A673 (cell line): ENCODE measurements at regions of chr10 and their contacts with region 1.

Region 1: DNA sequence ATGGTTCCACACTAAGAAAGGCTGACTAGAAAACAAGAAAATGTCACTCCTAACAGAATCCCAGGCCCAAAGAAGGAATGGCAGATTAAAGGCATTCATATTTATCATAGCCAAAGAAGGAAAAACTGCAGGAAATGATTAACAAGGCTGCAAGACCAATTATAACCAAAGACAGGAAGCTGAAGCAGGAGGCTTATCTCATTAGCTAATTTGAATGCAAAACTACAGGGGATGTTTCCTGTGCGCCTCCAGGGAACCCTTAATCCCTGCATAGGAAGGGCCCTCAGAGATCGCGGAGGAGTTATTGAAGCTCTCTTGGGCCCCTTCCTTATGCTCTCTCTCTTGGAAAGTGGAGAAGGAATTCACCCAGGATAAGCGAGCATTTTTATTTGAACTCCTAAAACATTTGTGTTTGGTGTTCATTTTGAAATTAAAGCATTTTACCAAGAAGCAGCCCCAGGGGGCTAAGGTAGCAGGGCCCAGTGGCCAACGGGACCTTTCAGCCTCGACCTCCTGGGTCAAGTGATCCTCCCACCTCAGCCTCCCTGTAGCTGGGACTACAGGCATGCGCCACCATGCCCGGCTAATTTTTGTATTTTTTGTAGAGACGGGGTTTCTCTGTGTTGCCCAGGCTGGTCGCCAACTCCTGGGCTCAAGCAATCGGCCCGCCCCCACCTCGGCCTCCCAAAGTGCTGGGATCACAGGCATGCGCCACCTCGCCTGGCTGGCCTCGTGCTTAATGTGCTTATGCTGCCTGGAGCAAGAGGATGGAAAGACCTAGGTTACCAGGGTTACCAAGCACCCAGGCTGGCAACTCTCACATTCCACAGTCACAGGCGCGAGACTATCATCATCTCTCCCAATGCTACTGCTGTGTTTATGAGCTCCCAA is 24.1 kb upstream of the PROSER2 start:
- DNase-seq: peak; percentile 100
- H3K4me3 ChIP-seq: peak overlapping the region; percentile 3
- H3K27ac ChIP-seq: peak overlapping the region; percentile 98
- H3K4me1 ChIP-seq: peaks cover 53% of the 10 kb centered on the region
- H3K27me3 ChIP-seq: no peaks in the 10 kb centered on the region
- CTCF ChIP-seq: no peak

Region 2: GRCh38 chr10:11270135-11270857 is 528.8 kb before region 1 on chr10:
- CTCF ChIA-PET with region 1: no interaction called
- POLR2A ChIA-PET with region 1: no interaction called
- intact Hi-C with region 1: no loop called
- DNase-seq: peak; percentile 69
- H3K4me3 ChIP-seq: no peak overlapping the region
- H3K27ac ChIP-seq: no peak overlapping the region
- H3K4me1 ChIP-seq: no peaks in the 10 kb centered on the region
- H3K27me3 ChIP-seq: peaks cover 56% of the 10 kb centered on the region
- CTCF ChIP-seq: peak; percentile 95

Region 3: DNA sequence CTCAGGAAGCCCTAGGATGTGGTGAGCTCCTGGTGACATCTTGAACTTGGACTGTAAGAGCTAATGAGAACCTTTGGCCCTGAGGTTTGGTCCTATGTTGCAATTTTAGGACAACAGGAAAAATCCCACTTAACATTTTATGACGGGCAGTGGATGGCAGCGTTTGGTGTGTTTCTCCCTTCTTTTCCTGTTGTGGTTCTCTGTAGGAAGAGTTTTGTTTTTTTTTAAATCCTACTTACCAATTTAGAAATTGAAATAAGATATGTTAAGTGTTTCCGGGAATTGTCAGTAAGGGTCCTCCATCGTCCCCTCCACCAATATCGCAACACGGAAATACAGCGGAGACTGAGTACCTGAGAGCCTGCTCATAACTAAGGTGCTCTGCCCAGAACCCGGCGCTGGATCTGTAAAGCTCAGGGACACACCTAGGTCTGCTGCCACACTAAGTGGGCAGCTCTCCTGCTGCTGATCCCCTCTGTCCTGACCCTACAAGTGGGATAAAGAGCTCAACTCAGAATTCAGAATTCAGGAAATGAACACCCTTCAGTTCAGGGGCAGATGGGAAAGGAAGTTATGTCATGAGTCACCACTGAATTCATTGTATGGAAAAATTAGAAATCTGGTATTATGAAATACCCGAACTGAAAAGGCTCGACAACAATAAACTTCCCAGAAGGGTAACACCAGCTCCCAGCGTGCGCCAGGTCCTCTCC is 14.9 kb after region 1 on chr10:
- CTCF ChIA-PET with region 1: interaction called, 6 read pairs
- POLR2A ChIA-PET with region 1: interaction called, 4 read pairs
- intact Hi-C with region 1: loop called (anchors 1 kb)
- DNase-seq: peak; percentile 91
- H3K4me3 ChIP-seq: no peak overlapping the region
- H3K27ac ChIP-seq: peak overlapping the region; percentile 80
- H3K4me1 ChIP-seq: peaks cover 37% of the 10 kb centered on the region
- H3K27me3 ChIP-seq: no peaks in the 10 kb centered on the region
- CTCF ChIP-seq: no peak

Region 4: DNA sequence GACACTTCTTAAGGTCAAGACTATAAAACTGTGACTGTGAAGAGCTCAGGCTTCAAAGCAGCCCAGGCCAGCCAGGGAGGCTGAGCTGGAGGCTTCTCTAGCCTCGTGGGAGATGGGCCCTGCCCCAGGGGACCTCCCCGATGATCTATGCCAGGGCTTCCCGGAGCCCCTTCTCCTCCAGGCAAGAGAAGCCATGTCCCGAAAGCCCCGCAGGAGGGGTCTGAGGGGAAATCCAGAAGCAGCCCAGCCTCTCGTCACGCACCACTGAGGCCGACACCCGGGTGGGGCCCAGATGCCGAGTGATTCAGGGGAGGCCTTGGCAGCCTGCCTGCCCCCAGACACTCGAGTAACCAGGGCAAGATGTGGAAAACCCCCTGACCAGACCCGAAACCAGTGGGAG is 87.8 kb after region 1 on chr10:
- CTCF ChIA-PET with region 1: no interaction called
- POLR2A ChIA-PET with region 1: no interaction called
- intact Hi-C with region 1: no loop called
- DNase-seq: no peak
- H3K4me3 ChIP-seq: no peak overlapping the region
- H3K27ac ChIP-seq: peak overlapping the region; percentile 59
- H3K4me1 ChIP-seq: peaks cover 17% of the 10 kb centered on the region
- H3K27me3 ChIP-seq: no peaks in the 10 kb centered on the region
- CTCF ChIP-seq: no peak

Region 5: GRCh38 chr10:11958956-11959355 is 159.9 kb after region 1 on chr10:
- CTCF ChIA-PET with region 1: no interaction called
- POLR2A ChIA-PET with region 1: no interaction called
- intact Hi-C with region 1: no loop called
- DNase-seq: no peak
- H3K4me3 ChIP-seq: no peak overlapping the region
- H3K27ac ChIP-seq: no peak overlapping the region
- H3K4me1 ChIP-seq: no peaks in the 10 kb centered on the region
- H3K27me3 ChIP-seq: no peaks in the 10 kb centered on the region
- CTCF ChIP-seq: no peak